Naive thymus-derived CD4-positive, alpha-beta T cell (primary cell): ENCODE measurements at regions of chr11 and their contacts with region 1.

Region 1: GRCh38 chr11:26632691-26633159 is 60.7 kb upstream of the MUC15 start:
- DNase-seq: no peak
- ATAC-seq: no peak
- H3K4me3 ChIP-seq: no peak overlapping the region
- H3K4me3 Mint-ChIP-seq: no peak overlapping the region
- H3K27ac ChIP-seq: no peak overlapping the region
- H3K27ac Mint-ChIP-seq: no peak overlapping the region
- H3K4me1 ChIP-seq: no peaks in the 10 kb centered on the region
- H3K4me1 Mint-ChIP-seq: no peaks in the 10 kb centered on the region
- H3K27me3 ChIP-seq: no peaks in the 10 kb centered on the region
- H3K27me3 Mint-ChIP-seq: no peaks in the 10 kb centered on the region

Region 2: DNA sequence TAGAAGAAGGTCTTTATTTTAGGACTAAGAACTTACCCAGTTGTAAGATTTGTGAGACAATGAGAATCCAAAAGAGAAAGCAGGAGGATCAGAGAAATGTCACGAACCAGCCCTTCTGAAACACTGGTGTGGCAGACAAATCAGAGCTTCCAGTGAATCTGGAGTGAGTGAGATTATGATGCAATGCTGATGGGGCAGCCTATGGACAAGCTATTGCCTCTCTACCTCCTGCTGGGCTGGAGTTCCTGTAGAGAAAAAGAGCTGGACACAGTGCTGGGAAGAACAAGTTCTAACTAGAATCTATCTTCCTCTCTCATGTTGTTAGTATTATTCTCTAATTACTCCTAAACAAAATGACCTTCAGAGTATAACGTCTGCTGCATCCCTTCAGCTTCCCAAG is 312.8 kb before region 1 on chr11:
- CTCF ChIA-PET with region 1: no interaction called
- POLR2A ChIA-PET with region 1: no interaction called
- intact Hi-C with region 1: loop called in 1 of 2 experiments (anchors 5 kb)
- DNase-seq: no peak
- ATAC-seq: no peak
- H3K4me3 ChIP-seq: no peak overlapping the region
- H3K4me3 Mint-ChIP-seq: no peak overlapping the region
- H3K27ac ChIP-seq: no peak overlapping the region
- H3K27ac Mint-ChIP-seq: no peak overlapping the region
- H3K4me1 ChIP-seq: no peaks in the 10 kb centered on the region
- H3K4me1 Mint-ChIP-seq: no peaks in the 10 kb centered on the region
- H3K27me3 ChIP-seq: no peaks in the 10 kb centered on the region
- H3K27me3 Mint-ChIP-seq: no peaks in the 10 kb centered on the region

Region 3: DNA sequence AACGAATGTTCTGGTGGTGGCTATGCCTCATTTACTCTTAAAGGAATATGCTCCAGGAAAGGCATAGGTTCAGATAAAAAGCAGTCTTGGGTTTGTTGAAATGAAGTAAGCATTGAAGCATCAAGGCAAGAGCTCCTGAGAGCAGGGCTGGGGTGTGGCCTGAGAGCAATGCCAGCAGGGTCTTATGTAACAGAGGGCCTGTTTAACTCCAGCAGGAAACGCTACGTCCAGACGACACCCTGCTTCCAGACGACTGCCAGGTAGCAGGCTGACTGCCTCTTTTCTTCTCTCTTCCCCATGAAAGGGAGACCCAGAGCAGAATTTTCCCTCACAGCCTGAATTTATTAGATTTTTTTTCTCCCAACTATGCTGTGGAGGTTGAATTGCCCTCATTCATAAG is 216.3 kb after region 1 on chr11:
- CTCF ChIA-PET with region 1: no interaction called
- POLR2A ChIA-PET with region 1: no interaction called
- intact Hi-C with region 1: no loop called
- DNase-seq: no peak
- ATAC-seq: no peak
- H3K4me3 ChIP-seq: no peak overlapping the region
- H3K4me3 Mint-ChIP-seq: no peak overlapping the region
- H3K27ac ChIP-seq: no peak overlapping the region
- H3K27ac Mint-ChIP-seq: no peak overlapping the region
- H3K4me1 ChIP-seq: no peaks in the 10 kb centered on the region
- H3K4me1 Mint-ChIP-seq: no peaks in the 10 kb centered on the region
- H3K27me3 ChIP-seq: no peaks in the 10 kb centered on the region
- H3K27me3 Mint-ChIP-seq: no peaks in the 10 kb centered on the region